ENCODE measurements at regions of chr2 and their contacts with region 1.

Region 1: DNA sequence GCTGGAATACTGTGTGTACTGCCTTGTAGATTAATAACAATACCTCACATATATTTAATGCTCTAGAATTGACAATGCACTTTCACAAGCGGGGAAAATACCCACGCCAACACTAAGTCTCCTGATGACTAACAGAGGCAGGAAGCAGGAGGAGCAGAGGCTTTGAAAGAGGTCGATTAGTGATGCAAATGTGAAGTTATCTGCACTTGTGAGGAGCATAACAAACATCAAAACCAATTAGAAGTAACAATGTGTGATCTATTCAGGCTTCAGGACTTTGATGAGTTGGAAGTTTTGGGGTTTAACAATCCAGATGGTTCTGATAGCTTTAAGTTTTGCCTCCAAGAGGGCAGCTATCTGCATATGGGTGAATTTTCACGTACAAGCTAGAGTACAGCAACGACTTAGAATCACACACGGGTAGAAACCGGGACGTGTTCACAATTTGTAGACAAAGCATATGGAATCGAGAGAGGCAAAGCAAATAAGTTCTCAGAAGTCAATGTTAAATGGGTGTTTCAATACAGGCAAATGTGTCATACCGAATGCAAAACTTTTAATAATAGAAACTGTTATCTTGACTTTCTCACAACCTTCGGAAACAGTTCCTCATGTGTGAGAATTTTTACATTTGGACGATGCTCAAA is 114.5 kb downstream of the METTL8 start:
- DNase-seq: peak; percentile 53
- H3K4me3 Mint-ChIP-seq: peak overlapping the region; percentile 75
- H3K27ac Mint-ChIP-seq: peak overlapping the region; percentile 95
- H3K4me1 Mint-ChIP-seq: peaks cover 64% of the 10 kb centered on the region
- H3K27me3 Mint-ChIP-seq: no peaks in the 10 kb centered on the region

Region 2: GRCh38 chr2:170369894-170370293 is 949.4 kb before region 1 on chr2:
- intact Hi-C with region 1: loop called (anchors 1 kb)
- DNase-seq: no peak
- H3K4me3 Mint-ChIP-seq: no peak overlapping the region
- H3K27ac Mint-ChIP-seq: no peak overlapping the region
- H3K4me1 Mint-ChIP-seq: peaks cover 44% of the 10 kb centered on the region
- H3K27me3 Mint-ChIP-seq: peaks cover 12% of the 10 kb centered on the region

Region 3: DNA sequence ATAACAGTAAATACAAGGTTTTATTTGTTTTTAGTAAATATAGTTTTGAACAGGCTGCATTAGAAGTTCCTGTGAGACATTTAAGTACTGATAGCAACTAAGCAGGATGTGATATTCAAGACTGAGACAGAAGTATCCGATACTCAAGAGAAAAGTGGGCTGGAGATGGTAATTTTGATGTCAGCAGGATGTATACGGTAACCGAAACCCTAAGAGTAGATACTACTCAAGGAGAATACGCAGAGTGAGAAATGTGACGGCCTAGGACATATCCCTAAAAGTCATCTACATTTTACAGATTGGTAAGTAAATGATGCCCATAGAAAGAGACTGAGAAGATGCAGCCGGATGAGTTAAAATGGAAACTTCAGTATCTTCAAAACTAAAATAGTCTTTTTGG is 274.9 kb before region 1 on chr2:
- intact Hi-C with region 1: loop called (anchors 2 kb)
- DNase-seq: no peak
- H3K4me3 Mint-ChIP-seq: no peak overlapping the region
- H3K27ac Mint-ChIP-seq: peak overlapping the region; percentile 59
- H3K4me1 Mint-ChIP-seq: peaks cover 30% of the 10 kb centered on the region
- H3K27me3 Mint-ChIP-seq: no peaks in the 10 kb centered on the region

Region 4: DNA sequence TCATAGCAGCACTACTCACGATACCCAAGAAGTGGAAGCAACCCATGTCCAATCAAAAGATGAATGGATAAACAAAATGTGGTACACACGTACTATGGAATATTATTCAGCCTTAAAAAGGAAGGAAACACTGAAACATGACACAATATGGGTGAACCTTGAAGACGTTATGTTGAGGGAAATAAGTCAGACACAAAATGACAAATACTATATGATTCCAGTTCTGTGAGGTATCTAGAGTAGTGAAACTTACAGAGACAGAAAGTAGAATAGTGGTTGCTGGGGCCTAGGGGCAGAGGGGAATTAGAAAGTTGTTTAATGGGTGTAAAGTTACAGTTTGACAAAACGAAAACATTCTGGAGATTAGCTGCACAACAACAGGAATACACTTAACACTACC is 183.3 kb before region 1 on chr2:
- intact Hi-C with region 1: loop called (anchors 1 kb)
- DNase-seq: no peak
- H3K4me3 Mint-ChIP-seq: no peak overlapping the region
- H3K27ac Mint-ChIP-seq: peak overlapping the region; percentile 84
- H3K4me1 Mint-ChIP-seq: peaks cover 20% of the 10 kb centered on the region
- H3K27me3 Mint-ChIP-seq: no peaks in the 10 kb centered on the region

Region 5: DNA sequence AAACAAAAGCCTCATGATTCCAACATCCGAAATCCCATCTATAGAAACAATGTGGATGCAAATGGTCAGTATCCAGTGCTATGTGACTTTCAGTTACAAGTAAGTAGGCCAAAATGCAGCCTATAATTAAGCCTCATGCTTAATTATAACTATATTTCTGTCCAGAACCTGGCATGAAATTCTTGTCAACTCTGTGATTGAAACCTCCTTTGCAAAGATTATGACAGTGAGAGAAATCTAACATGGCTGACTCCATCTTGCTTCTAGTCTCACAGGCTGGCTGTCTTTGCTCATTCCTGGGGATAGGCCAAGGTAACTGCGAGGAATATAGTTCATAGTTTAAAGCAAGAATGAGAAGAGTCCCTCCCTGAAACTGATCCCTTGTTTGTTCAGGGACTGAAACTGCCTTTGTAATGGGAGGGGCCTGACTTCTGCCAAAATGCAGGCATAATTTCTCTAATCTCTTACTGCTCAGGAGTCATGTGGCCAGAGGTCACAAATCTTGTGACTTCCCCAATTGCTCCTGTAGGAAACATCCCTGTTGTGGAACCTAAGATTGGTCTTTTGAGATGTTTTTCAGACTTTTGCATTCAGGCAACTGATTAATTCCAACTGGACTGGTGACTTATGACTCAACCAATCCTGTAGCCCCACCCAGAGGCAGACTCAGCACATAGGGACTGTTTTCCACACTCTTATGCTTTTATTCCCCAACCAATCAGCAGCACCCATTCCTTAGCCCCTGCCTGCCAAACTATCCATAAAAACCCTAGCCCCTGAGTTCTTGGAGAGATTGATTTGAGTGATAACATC is 74.1 kb before region 1 on chr2:
- intact Hi-C with region 1: loop called (anchors 1 kb)
- DNase-seq: no peak
- H3K4me3 Mint-ChIP-seq: no peak overlapping the region
- H3K27ac Mint-ChIP-seq: no peak overlapping the region
- H3K4me1 Mint-ChIP-seq: peaks cover 47% of the 10 kb centered on the region
- H3K27me3 Mint-ChIP-seq: no peaks in the 10 kb centered on the region

Region 6: DNA sequence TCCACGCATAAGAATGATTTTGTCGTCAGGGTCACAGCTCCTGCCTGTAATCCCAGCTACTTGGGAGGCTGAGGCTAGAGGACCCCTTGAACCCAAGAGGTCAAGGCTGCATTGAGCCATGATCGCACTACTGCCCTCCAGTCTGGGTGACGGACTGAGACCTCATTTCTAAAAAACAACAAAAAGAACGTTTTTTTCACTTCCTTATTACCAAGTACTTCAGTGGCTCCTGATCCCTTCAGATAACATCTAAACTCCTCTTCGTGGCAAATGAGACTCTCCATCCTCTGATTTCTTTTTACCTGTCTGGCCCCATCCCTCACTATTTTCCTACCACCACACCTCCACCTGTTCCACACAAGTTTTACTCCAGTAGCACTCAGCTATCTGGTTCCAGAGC is 53.2 kb before region 1 on chr2:
- intact Hi-C with region 1: no loop called
- DNase-seq: no peak
- H3K4me3 Mint-ChIP-seq: no peak overlapping the region
- H3K27ac Mint-ChIP-seq: no peak overlapping the region
- H3K4me1 Mint-ChIP-seq: peaks cover 16% of the 10 kb centered on the region
- H3K27me3 Mint-ChIP-seq: no peaks in the 10 kb centered on the region

Region 7: DNA sequence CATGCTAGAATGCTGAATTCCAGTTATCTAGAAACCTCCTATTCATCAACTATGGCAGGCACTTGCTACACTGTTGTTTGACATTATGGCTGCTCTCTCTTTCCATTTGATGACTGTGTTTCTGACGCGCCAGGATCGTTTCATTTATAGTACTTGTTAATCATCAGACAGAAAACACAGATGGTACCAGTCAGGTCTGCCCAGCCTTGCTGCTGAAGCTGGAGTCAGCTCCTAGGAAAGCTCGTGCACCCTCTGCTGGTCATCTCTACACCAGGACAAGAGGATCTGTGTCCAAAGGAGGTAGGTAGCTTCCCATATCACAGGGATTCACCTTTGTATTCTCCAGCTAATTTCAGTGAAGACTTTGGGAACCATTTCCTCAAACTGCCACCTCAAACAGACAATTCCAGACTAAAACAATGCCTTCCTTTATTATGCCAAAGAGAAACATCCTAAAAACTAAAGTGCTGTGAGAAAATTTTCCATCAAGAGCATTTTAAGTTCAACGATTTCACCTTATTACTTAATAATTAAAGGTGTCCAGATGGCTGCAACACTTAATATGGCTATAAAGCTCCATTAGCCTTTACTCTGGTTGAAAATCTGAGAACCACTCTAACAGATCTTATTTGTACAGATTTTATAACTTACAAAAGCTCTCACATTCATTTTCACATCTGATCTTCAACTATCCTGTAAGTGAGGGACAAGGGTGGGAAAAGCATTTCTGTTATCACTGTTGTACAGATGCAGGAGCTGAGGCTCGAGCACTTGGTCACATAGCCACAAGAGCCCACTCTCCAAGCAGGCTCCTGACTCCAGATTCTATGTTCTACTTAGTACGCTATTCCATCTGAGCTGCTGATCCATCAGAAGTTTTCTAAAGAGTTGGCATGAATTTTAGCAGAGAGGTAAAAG is 97.0 kb after region 1 on chr2:
- intact Hi-C with region 1: loop called (anchors 1 kb)
- DNase-seq: peak; percentile 65
- H3K4me3 Mint-ChIP-seq: no peak overlapping the region
- H3K27ac Mint-ChIP-seq: peak overlapping the region; percentile 78
- H3K4me1 Mint-ChIP-seq: peaks cover 33% of the 10 kb centered on the region
- H3K27me3 Mint-ChIP-seq: no peaks in the 10 kb centered on the region